Activated T-helper 1 cell treated with anti-CD3 and anti-CD28 coated beads, Interleukin-12 subunit alpha, Interleukin-12 subunit beta, Interleukin-2, Interleukin-4 antibody, amounts not matched to agents 30 ng/mL and 10 ng/mL and 1 ng/mL, durations not matched to agents 14 hours and 24 hours and 36 hours (primary cell): ENCODE measurements at regions of chrX and their contacts with region 1.

Region 1: GRCh38 chrX:137427806-137428205 is 138.1 kb upstream of the ZIC3 start:
- DNase-seq: no peak
- H3K4me3 Mint-ChIP-seq: peak overlapping the region; percentile 64
- H3K27ac Mint-ChIP-seq: no peak overlapping the region
- H3K4me1 Mint-ChIP-seq: no peaks in the 10 kb centered on the region
- H3K27me3 Mint-ChIP-seq: peaks cover 59% of the 10 kb centered on the region

Region 2: GRCh38 chrX:137031517-137032340 is 396.1 kb before region 1 on chrX:
- intact Hi-C with region 1: loop called (anchors 5 kb)
- DNase-seq: peak; percentile 42
- H3K4me3 Mint-ChIP-seq: no peak overlapping the region
- H3K27ac Mint-ChIP-seq: no peak overlapping the region
- H3K4me1 Mint-ChIP-seq: peaks cover 9% of the 10 kb centered on the region
- H3K27me3 Mint-ChIP-seq: peaks cover 39% of the 10 kb centered on the region

Region 3: GRCh38 chrX:137549851-137550664 is 122.3 kb after region 1 on chrX:
- intact Hi-C with region 1: loop called (anchors 5 kb)
- DNase-seq: no peak
- H3K4me3 Mint-ChIP-seq: no peak overlapping the region
- H3K27ac Mint-ChIP-seq: no peak overlapping the region
- H3K4me1 Mint-ChIP-seq: no peaks in the 10 kb centered on the region
- H3K27me3 Mint-ChIP-seq: peaks cover 23% of the 10 kb centered on the region

Region 4: DNA sequence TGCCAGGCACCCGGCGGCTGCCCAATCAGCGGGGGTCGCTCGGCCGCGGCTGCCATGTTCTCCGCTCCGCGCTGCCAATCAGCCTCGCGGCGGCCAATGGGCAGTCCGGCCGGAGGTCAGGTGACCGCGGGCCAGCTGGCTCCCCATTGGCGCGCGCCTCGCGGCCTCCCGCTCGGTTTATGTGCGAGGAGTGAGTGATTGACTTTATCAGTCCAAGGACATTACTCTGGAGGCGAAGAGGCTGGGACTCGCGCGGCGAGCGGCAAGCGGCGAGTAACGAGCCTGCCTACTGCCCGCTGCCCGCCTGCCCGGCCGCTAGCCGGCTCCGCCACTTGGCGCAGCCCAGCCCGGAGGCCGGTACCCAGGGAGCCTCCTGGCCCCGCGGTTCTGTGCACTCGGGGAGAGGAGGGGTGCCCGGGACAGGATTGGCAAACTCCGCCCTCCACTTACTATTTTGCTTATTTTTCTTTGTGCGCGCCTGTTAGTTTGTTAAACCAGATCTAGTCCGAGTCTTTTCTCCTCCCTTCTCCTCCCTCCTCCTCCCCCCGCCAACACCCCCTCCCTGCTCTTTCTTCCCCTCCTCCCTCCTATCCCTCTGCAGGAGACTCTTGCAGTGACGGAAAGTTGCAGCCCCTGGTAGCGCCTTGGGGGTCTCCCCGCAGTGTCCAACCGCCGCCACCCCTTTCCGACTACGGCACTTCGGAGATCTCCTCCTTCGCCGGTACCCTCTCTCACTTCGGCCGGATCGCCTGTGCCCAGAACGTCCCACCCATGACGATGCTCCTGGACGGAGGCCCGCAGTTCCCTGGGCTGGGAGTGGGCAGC is 138.3 kb after region 1 on chrX and contains the start of gene ZIC3:
- intact Hi-C with region 1: loop called (anchors 2 kb)
- DNase-seq: no peak
- H3K4me3 Mint-ChIP-seq: no peak within 1 kb of the TSS
- H3K27ac Mint-ChIP-seq: peak within 1 kb of the TSS; percentile 75
- H3K4me1 Mint-ChIP-seq: no peaks in the 10 kb centered on the region
- H3K27me3 Mint-ChIP-seq: peaks cover 39% of the 10 kb centered on the region
- total RNA-seq, gene ZIC3: not detected in 2 replicates